ENCODE measurements at regions of chrX and their contacts with region 1.

Region 1: DNA sequence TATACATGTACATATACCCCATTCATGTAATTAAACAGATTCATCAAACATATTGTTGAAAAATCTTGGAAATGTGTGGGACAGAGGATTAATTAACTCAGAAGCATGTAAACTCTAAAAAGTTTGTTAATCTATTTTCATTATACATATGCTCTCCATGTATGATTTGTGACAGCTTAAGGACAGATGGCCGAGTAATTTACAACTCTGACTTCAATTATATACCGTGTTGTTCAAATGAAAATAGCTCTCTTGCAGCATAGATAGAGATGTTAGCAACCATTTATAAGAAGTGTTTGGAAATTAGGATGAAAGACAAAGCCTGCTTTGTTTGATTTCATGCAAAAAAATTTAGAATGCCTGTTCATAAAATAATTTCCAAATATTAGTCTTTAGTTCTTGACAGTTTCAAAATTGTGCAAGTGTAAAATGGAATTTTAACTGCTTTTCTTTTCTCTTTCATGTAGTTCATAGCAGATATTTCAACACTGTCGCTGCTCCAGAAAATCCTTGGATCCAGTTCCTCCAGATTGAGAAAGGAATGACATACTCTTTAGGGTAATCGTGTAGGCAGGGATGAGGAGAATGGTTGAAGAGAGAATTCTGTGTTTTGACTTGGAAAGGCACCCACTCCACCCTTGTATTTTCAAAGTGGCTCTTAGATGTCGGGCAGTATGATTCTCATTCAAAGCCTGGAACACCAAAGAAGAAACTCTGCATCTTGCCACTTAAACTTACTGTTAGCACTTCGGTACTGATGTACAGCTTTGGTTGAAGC is 23.1 kb downstream of the AFF2 start:
- DNase-seq: no peak
- H3K4me3 ChIP-seq: peak overlapping the region; percentile 59
- H3K27ac ChIP-seq: peak overlapping the region; percentile 100
- H3K4me1 ChIP-seq: peaks cover 96% of the 10 kb centered on the region
- CTCF ChIP-seq: no peak

Region 2: DNA sequence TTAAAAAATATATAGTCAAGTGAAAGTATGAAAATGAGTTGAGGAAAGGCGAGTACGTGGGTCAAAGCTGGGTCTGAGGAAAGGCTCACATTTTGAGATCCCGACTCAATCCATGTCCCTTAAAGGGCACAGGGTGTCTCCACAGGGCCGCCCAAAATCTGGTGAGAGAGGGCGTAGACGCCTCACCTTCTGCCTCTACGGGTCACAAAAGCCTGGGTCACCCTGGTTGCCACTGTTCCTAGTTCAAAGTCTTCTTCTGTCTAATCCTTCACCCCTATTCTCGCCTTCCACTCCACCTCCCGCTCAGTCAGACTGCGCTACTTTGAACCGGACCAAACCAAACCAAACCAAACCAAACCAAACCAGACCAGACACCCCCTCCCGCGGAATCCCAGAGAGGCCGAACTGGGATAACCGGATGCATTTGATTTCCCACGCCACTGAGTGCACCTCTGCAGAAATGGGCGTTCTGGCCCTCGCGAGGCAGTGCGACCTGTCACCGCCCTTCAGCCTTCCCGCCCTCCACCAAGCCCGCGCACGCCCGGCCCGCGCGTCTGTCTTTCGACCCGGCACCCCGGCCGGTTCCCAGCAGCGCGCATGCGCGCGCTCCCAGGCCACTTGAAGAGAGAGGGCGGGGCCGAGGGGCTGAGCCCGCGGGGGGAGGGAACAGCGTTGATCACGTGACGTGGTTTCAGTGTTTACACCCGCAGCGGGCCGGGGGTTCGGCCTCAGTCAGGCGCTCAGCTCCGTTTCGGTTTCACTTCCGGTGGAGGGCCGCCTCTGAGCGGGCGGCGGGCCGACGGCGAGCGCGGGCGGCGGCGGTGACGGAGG is 612.1 kb before region 1 on chrX and contains the start of gene FMR1:
- CTCF ChIA-PET with region 1: no interaction called
- POLR2A ChIA-PET with region 1: no interaction called
- intact Hi-C with region 1: loop called (anchors 5 kb)
- DNase-seq: peak; percentile 96
- H3K4me3 ChIP-seq: peak within 1 kb of the TSS; percentile 96
- H3K27ac ChIP-seq: peak within 1 kb of the TSS; percentile 91
- H3K4me1 ChIP-seq: peaks cover 30% of the 10 kb centered on the region
- CTCF ChIP-seq: no peak
- total RNA-seq, gene FMR1: 19.6 and 39.6 TPM in 2 replicates

Region 3: GRCh38 chrX:148310426-148311165 is 212.9 kb before region 1 on chrX:
- CTCF ChIA-PET with region 1: no interaction called
- POLR2A ChIA-PET with region 1: no interaction called
- intact Hi-C with region 1: loop called (anchors 5 kb)
- DNase-seq: peak; percentile 85
- H3K4me3 ChIP-seq: peak overlapping the region; percentile 24
- H3K27ac ChIP-seq: peak overlapping the region; percentile 86
- H3K4me1 ChIP-seq: peaks cover 39% of the 10 kb centered on the region
- CTCF ChIP-seq: no peak

Region 4: GRCh38 chrX:148459343-148459742 is 64.1 kb before region 1 on chrX:
- CTCF ChIA-PET with region 1: no interaction called
- POLR2A ChIA-PET with region 1: interaction called, 3 read pairs
- intact Hi-C with region 1: loop called (anchors 2 kb)
- DNase-seq: peak; percentile 90
- H3K4me3 ChIP-seq: peak overlapping the region; percentile 50
- H3K27ac ChIP-seq: peak overlapping the region; percentile 100
- H3K4me1 ChIP-seq: peaks cover 78% of the 10 kb centered on the region
- CTCF ChIP-seq: no peak

Region 5: GRCh38 chrX:148541544-148541983 is 18.1 kb after region 1 on chrX:
- CTCF ChIA-PET with region 1: interaction called, 3 read pairs
- POLR2A ChIA-PET with region 1: interaction called, 163 read pairs
- intact Hi-C with region 1: loop called (anchors 1 kb)
- DNase-seq: peak; percentile 58
- H3K4me3 ChIP-seq: peak overlapping the region; percentile 56
- H3K27ac ChIP-seq: peak overlapping the region; percentile 96
- H3K4me1 ChIP-seq: peaks cover 97% of the 10 kb centered on the region
- CTCF ChIP-seq: no peak

Region 6: GRCh38 chrX:148555571-148556243 is 32.2 kb after region 1 on chrX:
- CTCF ChIA-PET with region 1: no interaction called
- POLR2A ChIA-PET with region 1: no interaction called
- intact Hi-C with region 1: no loop called
- DNase-seq: no peak
- H3K4me3 ChIP-seq: no peak overlapping the region
- H3K27ac ChIP-seq: no peak overlapping the region
- H3K4me1 ChIP-seq: peaks cover 39% of the 10 kb centered on the region
- CTCF ChIP-seq: no peak

Region 7: DNA sequence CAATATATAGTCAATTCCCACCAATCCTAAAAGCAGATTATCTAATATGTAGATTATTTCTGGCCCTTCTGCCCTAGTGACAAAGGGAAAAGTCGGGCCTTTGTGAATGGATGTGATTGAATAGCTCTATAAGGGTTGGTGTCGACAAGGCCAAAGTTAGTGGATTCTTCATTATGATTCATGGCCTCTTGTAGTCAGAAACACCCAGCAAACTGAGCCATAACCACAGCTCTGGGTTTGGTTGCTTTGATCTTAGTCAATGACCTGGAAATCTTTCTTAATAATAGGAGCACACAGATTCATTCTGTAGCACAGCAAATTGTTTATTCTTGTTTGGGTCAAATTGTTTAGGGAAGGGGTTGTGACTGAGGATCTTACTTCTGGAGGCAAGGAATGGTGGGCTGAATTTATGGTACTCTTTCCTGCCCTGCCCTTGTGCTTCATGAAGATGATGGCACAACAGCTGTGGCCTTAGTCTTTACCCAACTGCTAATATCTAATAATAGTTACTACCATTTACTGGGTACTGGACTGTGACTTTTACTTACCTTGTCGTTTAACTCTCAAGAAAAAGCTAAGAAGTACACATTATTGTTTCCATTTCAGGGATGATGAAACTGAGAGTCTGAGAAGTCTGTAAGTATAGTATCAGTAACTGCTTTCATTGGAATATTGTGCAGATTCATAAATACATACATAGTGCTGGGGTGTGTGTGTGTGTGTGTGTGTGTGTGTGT is 50.9 kb after region 1 on chrX:
- CTCF ChIA-PET with region 1: no interaction called
- POLR2A ChIA-PET with region 1: interaction called, 3 read pairs
- intact Hi-C with region 1: loop called (anchors 1 kb)
- DNase-seq: peak; percentile 69
- H3K4me3 ChIP-seq: peak overlapping the region; percentile 47
- H3K27ac ChIP-seq: peak overlapping the region; percentile 95
- H3K4me1 ChIP-seq: peaks cover 84% of the 10 kb centered on the region
- CTCF ChIP-seq: no peak

Region 8: GRCh38 chrX:148609515-148610327 is 86.2 kb after region 1 on chrX:
- CTCF ChIA-PET with region 1: no interaction called
- POLR2A ChIA-PET with region 1: interaction called, 6 read pairs
- intact Hi-C with region 1: loop called (anchors 2 kb)
- DNase-seq: peak; percentile 86
- H3K4me3 ChIP-seq: peak overlapping the region; percentile 60
- H3K27ac ChIP-seq: peak overlapping the region; percentile 99
- H3K4me1 ChIP-seq: peaks cover 61% of the 10 kb centered on the region
- CTCF ChIP-seq: no peak

Region 9: DNA sequence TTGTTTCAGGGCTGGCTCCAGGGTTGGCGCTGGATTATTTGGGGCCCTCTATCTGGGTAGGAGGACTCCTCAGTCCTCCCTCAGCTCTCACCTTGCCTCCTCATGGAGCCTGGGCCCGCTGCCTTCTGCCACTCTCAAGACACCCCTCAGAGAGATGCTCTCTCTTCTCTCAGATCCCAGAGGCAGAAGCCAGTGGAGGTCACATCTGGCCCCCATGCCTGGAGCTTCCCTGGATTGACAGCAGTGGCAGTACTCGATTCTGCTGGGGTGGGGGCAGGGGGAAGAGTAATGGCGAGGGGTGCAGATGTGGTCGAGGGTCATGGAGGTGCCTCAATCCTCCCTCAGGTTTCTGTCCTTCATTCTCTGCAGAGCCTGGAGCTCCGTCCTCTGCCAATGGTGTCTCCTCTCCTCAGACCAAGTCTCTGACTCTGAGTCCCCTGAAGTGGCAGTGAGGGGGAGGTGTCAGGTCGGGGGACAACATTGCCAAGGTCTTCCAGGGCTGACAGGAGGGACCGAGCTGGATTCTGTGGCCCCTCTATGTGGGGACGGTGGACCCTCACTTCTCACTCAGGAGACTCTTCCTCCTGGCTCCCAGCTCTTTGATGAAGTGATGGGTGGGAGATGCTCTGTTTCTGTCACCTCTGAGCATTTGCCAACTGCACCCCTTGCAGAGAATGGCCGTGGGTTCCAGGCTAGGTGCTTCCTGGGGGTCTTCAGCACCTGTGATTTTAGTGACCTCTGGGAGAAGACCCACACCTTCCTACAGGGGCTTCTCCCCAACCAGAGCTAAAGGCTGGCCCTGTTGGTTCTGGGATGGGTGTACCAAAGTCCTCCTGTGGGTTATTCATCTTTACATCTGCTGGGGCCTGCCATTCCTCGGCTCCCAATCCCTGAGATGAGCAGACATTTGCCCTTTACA is 1239.5 kb after region 1 on chrX:
- CTCF ChIA-PET with region 1: no interaction called
- POLR2A ChIA-PET with region 1: no interaction called
- intact Hi-C with region 1: no loop called
- DNase-seq: no peak
- H3K4me3 ChIP-seq: no peak overlapping the region
- H3K27ac ChIP-seq: no peak overlapping the region
- H3K4me1 ChIP-seq: no peaks in the 10 kb centered on the region
- CTCF ChIP-seq: no peak